ENCODE measurements at regions of chr4 and their contacts with region 1.

Region 1: GRCh38 chr4:168319486-168320019 is 1.0 kb upstream of the DDX60 start:
- DNase-seq: no peak
- H3K4me3 ChIP-seq: no peak overlapping the region
- H3K27ac ChIP-seq: peak overlapping the region in 1 of 2 donors; percentile 96
- H3K4me1 ChIP-seq: peaks cover 3% of the 10 kb centered on the region
- H3K27me3 ChIP-seq: no peaks in the 10 kb centered on the region
- CTCF ChIP-seq: no peak
- EP300 ChIP-seq: no peak
- POLR2A ChIP-seq: no peak

Region 2: GRCh38 chr4:168480931-168481611 is 161.5 kb after region 1 on chr4:
- intact Hi-C with region 1: loop called in 1 of 4 experiments (anchors 5 kb)
- DNase-seq: peak in 2 of 5 donors; percentile 14 to 25
- H3K4me3 ChIP-seq: peak overlapping the region; percentile 93
- H3K27ac ChIP-seq: peak overlapping the region; percentile 23 to 94
- H3K4me1 ChIP-seq: no peaks in the 10 kb centered on the region
- H3K27me3 ChIP-seq: no peaks in the 10 kb centered on the region
- CTCF ChIP-seq: no peak
- EP300 ChIP-seq: no peak
- POLR2A ChIP-seq: no peak

Measured in ovary (tissue), 10 donors.